Left ventricle myocardium superior (tissue), 1 donor: ENCODE measurements at regions of chr9 and their contacts with region 1.

Region 1: DNA sequence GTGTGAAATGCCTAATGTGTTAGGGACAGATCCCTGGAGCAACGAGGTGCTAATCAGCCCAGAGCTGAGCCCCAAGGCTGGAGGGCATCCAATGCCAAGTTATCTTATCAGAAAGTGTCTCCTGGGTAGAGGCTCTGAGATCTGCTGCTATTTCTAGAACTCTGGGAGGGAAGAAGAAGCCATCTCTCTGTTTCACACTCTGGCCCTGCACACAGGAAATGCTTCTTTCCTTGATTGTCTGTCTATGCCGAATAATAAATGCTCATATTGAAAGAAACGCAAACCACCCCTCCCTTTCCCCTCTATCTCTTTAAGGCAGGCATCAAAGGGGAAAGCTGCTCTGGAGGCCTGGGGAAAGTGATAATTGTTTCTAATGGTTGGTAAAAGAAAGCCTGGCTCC is 166.7 kb downstream of the PAPPA start:
- DNase-seq: peak; percentile 49
- ATAC-seq: peak; percentile 77

Region 2: GRCh38 chr9:116383946-116384345 is 63.7 kb after region 1 on chr9:
- intact Hi-C with region 1: loop called (anchors 2 kb)
- DNase-seq: no peak
- ATAC-seq: no peak

Region 3: GRCh38 chr9:116524778-116525470 is 204.6 kb after region 1 on chr9:
- intact Hi-C with region 1: no loop called
- DNase-seq: no peak
- ATAC-seq: no peak